ENCODE measurements at regions of chr6 and their contacts with region 1.

Region 1: DNA sequence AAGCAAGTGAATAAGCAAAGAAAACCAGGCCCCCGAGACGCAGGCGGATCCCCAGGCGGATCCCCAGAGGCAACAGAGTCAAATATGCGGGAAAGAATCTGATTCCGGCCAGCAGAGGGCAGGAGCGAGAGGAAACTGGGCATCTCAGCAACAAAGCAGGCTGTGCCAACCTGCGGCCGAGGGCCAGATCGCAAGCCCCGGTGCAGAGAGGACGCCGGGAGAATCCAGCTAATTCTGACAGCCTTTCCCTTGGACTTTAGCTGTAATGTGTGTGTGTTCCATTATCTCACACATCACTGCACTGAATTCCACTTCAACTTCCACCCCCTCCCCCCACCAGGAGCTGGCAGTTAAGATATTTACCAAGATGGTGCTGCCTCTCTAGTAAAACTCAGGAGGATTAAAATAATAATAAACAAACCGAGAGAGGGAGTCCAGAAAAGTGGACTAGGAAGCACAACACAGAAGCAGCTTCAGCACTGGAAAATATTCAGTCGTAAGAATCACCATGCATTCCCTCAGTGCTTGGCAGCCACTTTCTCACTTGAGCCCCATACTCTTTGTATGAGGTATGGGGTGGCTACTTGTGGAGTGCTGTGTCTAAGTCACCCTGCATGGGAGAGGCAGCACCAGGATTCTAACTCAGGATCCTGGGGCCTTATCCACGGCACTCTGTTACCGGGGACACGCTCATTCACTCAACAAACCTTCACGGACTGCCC is 66.2 kb upstream of the SNX9 start:
- DNase-seq: no peak
- H3K4me3 ChIP-seq: no peak overlapping the region
- CTCF ChIP-seq: peak; percentile 85

Region 2: GRCh38 chr6:156517088-156517487 is 1239.8 kb before region 1 on chr6:
- CTCF ChIA-PET with region 1: no interaction called
- POLR2A ChIA-PET with region 1: no interaction called
- DNase-seq: no peak
- H3K4me3 ChIP-seq: no peak overlapping the region
- CTCF ChIP-seq: no peak

Region 3: DNA sequence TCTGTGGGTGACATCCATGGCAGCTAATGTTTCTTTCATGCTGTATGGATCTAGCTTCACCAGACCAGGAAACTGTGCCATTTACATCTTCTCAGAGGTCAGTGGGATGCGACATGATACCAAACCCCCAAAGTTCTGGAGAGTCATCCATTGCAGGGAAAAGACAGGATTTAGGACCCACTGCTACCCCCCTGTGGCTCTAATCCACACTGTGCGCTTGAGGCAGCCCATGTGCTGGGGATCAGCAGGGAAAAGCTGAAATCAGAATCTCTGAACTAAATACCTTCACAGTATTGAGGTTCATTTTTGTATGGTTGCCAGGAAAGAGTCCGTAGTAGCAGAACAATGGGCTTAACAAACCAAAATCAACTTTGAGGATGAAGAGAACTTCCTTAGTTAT is 598.0 kb before region 1 on chr6:
- CTCF ChIA-PET with region 1: no interaction called
- POLR2A ChIA-PET with region 1: no interaction called
- DNase-seq: no peak
- H3K4me3 ChIP-seq: no peak overlapping the region
- CTCF ChIP-seq: no peak

Region 4: DNA sequence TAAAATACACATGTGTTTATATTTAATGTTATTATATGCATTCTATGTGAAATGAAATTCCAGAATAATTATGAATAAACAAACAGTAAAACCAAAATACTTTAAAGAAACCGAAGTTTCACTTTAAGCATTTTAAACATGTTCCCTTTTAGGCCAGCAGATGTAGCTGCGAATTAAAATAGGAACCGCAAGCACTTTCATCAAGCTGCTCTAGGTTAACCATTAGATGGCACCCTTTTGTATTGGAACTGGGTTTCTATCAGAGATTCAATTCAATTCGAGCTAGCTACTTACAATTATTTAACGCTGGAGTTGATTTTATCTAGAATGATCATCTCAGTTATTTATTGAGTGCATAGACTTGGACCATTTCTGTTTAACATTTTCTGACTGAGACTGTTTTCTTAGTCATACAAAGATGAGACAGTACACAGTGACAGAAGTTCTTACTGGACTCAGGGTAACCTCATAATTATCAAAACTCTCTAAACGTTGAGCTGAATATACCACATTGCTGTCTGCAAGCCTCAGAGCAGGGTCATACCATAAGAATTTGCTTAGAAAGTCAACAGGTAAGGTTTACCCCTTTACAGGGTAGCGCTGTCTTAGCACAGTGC is 442.1 kb before region 1 on chr6:
- CTCF ChIA-PET with region 1: interaction called, 11 read pairs
- POLR2A ChIA-PET with region 1: no interaction called
- DNase-seq: no peak
- H3K4me3 ChIP-seq: no peak overlapping the region
- CTCF ChIP-seq: peak; percentile 68

Region 5: GRCh38 chr6:157632821-157633220 is 124.0 kb before region 1 on chr6:
- CTCF ChIA-PET with region 1: no interaction called
- POLR2A ChIA-PET with region 1: no interaction called
- DNase-seq: no peak
- H3K4me3 ChIP-seq: no peak overlapping the region
- CTCF ChIP-seq: no peak

Region 6: DNA sequence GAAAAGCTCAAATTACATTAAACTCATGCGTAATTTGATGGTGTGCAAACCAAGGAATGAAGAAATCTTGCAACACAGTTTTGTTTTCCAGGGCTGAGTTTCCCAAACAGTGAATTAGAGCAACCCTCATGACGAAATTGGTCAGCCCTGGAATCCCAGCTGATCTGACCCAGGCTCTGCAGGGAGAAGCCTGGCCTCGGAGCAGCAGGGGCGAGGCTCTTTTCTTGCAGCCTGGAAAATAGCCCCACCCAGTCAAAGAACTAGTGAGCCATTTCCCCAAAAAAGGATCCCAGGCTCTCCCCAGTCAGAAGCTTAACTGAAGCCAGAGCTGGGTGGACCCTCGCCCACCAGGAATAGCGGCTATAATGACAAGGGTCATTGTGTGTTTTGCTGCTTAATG is 41.1 kb before region 1 on chr6:
- CTCF ChIA-PET with region 1: interaction called, 12 read pairs
- POLR2A ChIA-PET with region 1: no interaction called
- DNase-seq: peak; percentile 86
- H3K4me3 ChIP-seq: no peak overlapping the region
- CTCF ChIP-seq: no peak

Region 7: GRCh38 chr6:157845493-157846259 is 88.8 kb after region 1 on chr6:
- CTCF ChIA-PET with region 1: interaction called, 14 read pairs
- POLR2A ChIA-PET with region 1: no interaction called
- DNase-seq: no peak
- H3K4me3 ChIP-seq: no peak overlapping the region
- CTCF ChIP-seq: no peak

Region 8: DNA sequence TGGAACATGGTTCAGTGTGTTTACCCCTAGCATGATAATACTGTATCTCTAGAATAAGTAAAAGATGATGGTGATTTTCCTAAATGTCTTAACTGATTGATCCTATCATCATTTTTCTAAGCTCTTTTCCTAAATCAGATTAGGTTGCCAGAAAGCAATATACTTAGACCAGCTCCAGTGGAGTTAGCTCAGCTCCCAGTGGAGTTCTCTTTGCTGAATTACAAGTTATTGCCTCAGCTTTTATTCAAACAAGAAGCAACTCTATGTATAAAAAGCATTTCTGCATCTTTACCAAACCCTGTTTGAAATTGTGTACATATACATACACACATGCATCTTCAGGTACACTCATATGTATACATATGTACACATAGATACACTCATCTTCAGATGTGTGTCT is 111.1 kb after region 1 on chr6:
- CTCF ChIA-PET with region 1: interaction called, 225 read pairs
- POLR2A ChIA-PET with region 1: no interaction called
- DNase-seq: no peak
- H3K4me3 ChIP-seq: no peak overlapping the region
- CTCF ChIP-seq: no peak

Region 9: GRCh38 chr6:157898169-157898568 is 141.3 kb after region 1 on chr6:
- CTCF ChIA-PET with region 1: interaction called, 11 read pairs
- POLR2A ChIA-PET with region 1: interaction called, 3 read pairs
- DNase-seq: no peak
- H3K4me3 ChIP-seq: no peak overlapping the region
- CTCF ChIP-seq: peak; percentile 22